Activated T-helper 1 cell treated with anti-CD3 and anti-CD28 coated beads, Interleukin-12 subunit alpha, Interleukin-12 subunit beta, Interleukin-2, Interleukin-4 antibody, amounts not matched to agents 30 ng/mL and 10 ng/mL and 1 ng/mL, durations not matched to agents 14 hours and 24 hours and 36 hours (primary cell): ENCODE measurements at regions of chr9 and their contacts with region 1.

Region 1: DNA sequence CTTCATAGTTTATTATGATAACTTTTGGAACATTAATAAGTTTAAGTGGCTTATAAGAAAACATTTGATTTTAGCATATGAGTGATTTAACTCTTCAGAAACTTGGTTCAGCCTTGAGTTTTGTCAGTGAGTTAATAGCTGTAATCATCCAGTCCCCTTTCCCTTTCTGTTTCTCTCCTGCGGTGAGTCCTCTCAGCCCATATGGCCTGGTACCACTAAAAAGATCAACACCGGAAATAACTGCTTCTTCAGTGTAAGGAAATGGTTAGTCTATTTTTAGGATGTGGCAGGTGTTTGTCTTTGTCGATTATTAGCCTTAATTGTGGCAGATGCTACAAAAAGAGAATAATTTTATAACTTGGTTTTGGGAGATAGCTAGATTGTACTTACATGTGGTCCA is 120.2 kb upstream of the GRHPR start:
- DNase-seq: peak; percentile 34
- H3K4me3 Mint-ChIP-seq: peak overlapping the region; percentile 57
- H3K27ac Mint-ChIP-seq: peak overlapping the region; percentile 78
- H3K4me1 Mint-ChIP-seq: peaks cover 42% of the 10 kb centered on the region
- H3K27me3 Mint-ChIP-seq: no peaks in the 10 kb centered on the region

Region 2: DNA sequence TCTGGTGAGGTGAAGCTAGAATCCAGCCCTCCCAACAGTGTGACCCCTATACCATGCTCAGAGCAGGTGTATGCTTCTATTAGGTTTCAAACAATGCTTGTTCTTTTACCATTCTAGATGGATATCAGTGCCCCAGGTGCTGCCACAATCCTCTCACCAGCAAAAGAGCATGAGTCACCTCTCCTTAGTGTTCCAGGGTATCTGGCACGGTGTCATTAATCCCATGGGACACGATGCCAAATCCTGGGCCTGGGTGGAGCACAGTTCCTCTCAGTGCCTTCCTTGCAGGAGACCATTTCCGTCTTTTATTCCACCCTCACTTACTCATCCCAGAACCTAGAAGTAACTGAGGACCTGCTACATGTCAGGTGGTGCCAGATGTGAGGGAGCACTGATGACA is 1430.8 kb before region 1 on chr9:
- intact Hi-C with region 1: no loop called
- DNase-seq: no peak
- H3K4me3 Mint-ChIP-seq: no peak overlapping the region
- H3K27ac Mint-ChIP-seq: no peak overlapping the region
- H3K4me1 Mint-ChIP-seq: no peaks in the 10 kb centered on the region
- H3K27me3 Mint-ChIP-seq: peaks cover 7% of the 10 kb centered on the region

Region 3: GRCh38 chr9:36924071-36924470 is 378.2 kb before region 1 on chr9:
- intact Hi-C with region 1: loop called (anchors 2 kb)
- DNase-seq: peak; percentile 12
- H3K4me3 Mint-ChIP-seq: no peak overlapping the region
- H3K27ac Mint-ChIP-seq: peak overlapping the region; percentile 77
- H3K4me1 Mint-ChIP-seq: peaks cover 58% of the 10 kb centered on the region
- H3K27me3 Mint-ChIP-seq: no peaks in the 10 kb centered on the region

Region 4: DNA sequence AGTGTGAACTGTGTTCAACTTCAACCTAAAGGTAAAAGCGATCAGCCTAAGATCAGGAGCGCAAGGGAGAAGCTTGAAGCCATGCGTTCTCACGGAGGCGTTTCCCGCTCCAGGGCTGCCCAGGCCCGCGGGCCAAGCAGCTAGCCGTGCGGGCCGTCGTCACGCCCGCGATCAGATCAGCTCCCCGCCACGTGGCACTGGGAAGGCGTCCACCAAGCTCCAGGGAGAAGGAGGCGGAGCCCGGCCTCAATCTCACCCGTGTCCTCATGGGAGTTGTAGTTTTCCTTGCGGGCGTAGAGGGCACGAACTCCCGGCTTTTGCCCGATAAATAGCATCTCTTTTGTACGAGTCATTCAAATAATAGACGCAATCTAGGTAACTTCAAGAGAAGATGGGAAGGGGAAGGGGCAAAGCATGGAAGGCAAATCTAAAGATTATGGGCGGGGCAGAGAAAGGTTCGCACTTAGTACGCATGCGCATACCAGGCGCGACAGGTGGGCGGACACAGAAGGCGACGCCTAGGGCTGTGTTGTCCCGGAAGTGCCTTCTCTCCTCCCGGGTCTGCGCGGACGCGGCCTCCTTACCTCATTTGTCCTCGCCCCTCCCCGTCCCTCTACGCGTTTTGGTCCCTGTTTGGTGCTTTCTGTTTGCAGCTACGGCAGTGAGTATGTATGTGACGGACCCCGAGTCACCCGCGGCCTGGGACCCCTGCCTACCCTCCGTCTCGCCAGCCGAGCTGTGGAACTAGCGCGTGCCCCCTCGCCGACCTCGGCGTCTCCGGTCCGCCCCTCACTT is 222.7 kb before region 1 on chr9:
- intact Hi-C with region 1: loop called (anchors 5 kb)
- DNase-seq: peak; percentile 92
- H3K4me3 Mint-ChIP-seq: peak overlapping the region; percentile 95
- H3K27ac Mint-ChIP-seq: peak overlapping the region; percentile 97
- H3K4me1 Mint-ChIP-seq: peaks cover 44% of the 10 kb centered on the region
- H3K27me3 Mint-ChIP-seq: peaks cover 2% of the 10 kb centered on the region

Region 5: DNA sequence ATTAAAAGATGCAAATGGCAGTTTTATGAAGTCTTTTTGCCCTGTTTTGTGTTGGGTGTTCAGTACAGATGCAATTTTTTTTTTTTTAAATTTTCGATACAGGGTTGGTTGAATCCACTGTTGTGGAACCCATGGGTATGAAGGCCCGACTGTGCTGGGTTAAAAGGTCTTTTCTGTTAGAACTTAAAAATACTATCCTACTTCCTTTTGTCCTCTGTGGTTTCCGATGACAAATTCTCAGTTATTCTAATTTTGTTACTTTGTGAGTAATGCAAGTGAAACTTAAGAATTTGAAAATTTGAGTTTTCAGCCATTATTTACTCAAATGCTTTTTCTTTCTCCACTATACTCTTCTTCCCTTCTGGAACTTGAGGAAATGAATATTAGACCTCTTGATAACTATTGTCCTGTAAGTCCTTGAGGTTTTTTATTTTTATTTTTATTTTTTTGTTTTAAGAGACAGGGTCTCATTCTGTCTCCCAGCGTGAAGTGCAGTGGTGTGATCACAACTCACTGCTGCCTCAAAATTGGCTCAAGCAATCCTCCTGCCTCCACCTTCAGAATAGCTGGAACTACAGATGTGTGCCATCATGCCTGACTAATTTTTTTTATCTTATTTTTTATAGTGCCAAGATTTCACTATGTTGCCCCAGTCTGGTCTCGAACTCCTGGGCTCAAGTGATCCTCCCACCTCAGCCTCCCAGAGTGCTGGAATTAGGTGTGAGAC is 114.4 kb before region 1 on chr9:
- intact Hi-C with region 1: loop called (anchors 5 kb)
- DNase-seq: no peak
- H3K4me3 Mint-ChIP-seq: peak overlapping the region; percentile 79
- H3K27ac Mint-ChIP-seq: peak overlapping the region; percentile 90
- H3K4me1 Mint-ChIP-seq: peaks cover 24% of the 10 kb centered on the region
- H3K27me3 Mint-ChIP-seq: no peaks in the 10 kb centered on the region

Region 6: DNA sequence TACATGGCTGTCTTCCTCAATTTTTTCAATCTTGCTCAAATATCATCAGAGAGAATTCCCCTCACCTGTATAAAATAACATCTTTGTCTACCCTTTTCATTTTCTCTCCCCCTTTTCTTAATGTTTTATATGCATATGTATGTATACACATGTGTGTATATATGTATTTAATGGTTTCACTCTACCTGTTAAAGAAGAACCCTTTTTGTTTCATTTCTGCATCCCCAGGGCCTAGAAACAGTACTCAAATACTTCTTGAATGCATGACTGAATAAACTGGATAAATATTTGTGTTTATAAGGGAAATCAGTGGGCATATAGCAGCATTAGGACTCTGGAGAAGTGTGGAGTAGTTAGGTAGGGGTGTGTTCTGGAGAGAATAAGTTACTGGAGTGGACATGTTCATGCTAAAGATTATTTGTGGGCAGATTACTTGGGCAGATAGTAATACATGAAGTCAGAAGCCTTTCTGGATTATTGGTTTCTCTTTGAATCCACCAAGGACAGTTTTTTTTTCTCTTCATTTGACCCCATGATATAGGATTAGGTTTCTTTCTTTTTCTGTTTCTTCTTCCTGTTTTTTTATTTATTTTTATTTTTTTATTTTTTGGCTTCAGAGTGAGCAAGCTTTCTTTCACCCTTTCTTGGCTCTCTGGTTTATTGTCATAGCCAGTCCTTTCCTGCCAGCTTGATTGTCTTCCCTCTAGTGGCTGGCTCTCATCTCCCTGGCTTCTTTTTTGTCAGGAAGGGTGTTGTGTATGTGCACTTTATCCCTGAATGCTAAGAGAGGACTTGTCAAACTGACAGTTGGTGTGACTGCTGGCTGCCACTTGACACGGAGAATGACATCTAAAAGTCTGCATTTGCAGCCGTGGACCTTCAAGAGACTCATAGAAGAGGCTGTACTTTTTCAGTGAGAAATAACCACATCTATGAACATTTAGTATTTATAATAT is 92.6 kb before region 1 on chr9:
- intact Hi-C with region 1: loop called (anchors 5 kb)
- DNase-seq: no peak
- H3K4me3 Mint-ChIP-seq: no peak overlapping the region
- H3K27ac Mint-ChIP-seq: no peak overlapping the region
- H3K4me1 Mint-ChIP-seq: peaks cover 40% of the 10 kb centered on the region
- H3K27me3 Mint-ChIP-seq: no peaks in the 10 kb centered on the region

Region 7: DNA sequence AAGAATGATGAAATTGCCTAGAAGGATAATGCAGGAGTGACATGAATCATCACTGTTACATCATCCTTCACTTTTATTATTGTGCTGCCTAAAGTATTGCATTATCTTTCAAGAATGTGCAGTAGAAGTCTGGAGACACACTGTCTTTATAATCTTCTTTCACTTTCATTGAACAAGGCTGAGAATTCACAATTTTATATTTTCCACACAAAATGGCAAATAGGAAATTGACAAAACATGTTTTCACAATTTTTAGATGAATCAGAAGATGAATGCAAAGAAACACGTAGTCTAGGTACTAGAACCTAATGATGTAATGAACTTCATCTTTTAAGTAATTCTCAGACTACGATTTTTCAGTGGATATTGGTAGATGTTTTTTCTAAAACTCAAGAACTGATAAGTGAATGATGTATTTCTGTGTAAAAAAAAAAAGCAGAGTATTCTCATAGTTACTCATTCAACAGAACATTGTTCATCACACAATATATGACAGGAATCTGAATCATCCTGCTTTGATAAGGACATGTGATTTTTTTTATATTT is 11.3 kb before region 1 on chr9:
- intact Hi-C with region 1: loop called (anchors 1 kb)
- DNase-seq: no peak
- H3K4me3 Mint-ChIP-seq: peak overlapping the region; percentile 36
- H3K27ac Mint-ChIP-seq: peak overlapping the region; percentile 79
- H3K4me1 Mint-ChIP-seq: peaks cover 37% of the 10 kb centered on the region
- H3K27me3 Mint-ChIP-seq: no peaks in the 10 kb centered on the region

Region 8: DNA sequence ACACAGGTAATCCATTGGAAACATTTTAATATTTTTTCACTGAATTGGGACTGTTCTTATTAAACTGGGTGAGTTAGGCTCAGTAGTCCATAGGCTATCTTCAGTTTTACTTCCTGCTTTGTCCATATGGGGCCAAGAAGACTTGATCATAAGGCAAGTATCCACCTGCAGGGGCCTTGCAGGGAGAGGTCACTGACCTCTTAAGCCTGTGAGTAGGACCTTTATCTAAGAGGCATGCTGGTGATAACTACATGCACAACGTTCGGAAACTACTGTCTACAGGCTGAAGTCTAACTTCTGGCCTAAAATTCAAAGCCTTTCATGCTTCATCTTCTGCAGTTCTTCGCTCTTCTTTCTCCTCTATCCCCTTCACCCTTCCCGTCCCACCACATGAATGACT is 60.2 kb after region 1 on chr9:
- intact Hi-C with region 1: no loop called
- DNase-seq: no peak
- H3K4me3 Mint-ChIP-seq: no peak overlapping the region
- H3K27ac Mint-ChIP-seq: no peak overlapping the region
- H3K4me1 Mint-ChIP-seq: no peaks in the 10 kb centered on the region
- H3K27me3 Mint-ChIP-seq: no peaks in the 10 kb centered on the region

Region 9: GRCh38 chr9:37382161-37382981 is 80.1 kb after region 1 on chr9:
- intact Hi-C with region 1: no loop called
- DNase-seq: no peak
- H3K4me3 Mint-ChIP-seq: no peak overlapping the region
- H3K27ac Mint-ChIP-seq: no peak overlapping the region
- H3K4me1 Mint-ChIP-seq: no peaks in the 10 kb centered on the region
- H3K27me3 Mint-ChIP-seq: peaks cover 4% of the 10 kb centered on the region